Psoas muscle (tissue), 8 donors: ENCODE measurements at regions of chr16 and their contacts with region 1.

Region 1: GRCh38 chr16:2155091-2156021 is at the start of gene TRAF7:
- DNase-seq: peak; percentile 99
- ATAC-seq: peak; percentile 88 to 91 (median 89)
- H3K4me3 ChIP-seq: peak within 1 kb of the TSS; percentile 80
- H3K27ac ChIP-seq: peak within 1 kb of the TSS; percentile 90
- H3K4me1 ChIP-seq: peaks cover 67% of the 10 kb centered on the region
- H3K27me3 ChIP-seq: no peaks in the 10 kb centered on the region
- CTCF ChIP-seq: no peak
- total RNA-seq, gene TRAF7: 15.6 to 47.5 (median 38.9) TPM

Region 2: GRCh38 chr16:2023098-2023925 is 132.0 kb before region 1 on chr16:
- intact Hi-C with region 1: loop called in 1 of 2 experiments (anchors 5 kb)
- DNase-seq: peak; percentile 93 to 96
- ATAC-seq: peak; percentile 88 to 94 (median 92)
- H3K4me3 ChIP-seq: peak overlapping the region; percentile 46
- H3K27ac ChIP-seq: peak overlapping the region; percentile 52
- H3K4me1 ChIP-seq: peaks cover 24% of the 10 kb centered on the region
- H3K27me3 ChIP-seq: peaks cover 0 to 27% (median 16%) of the 10 kb centered on the region in 3 donors
- CTCF ChIP-seq: peak; percentile 96

Region 3: GRCh38 chr16:2190659-2191445 is 35.5 kb after region 1 on chr16:
- intact Hi-C with region 1: no loop called
- DNase-seq: no peak
- ATAC-seq: no peak
- H3K4me3 ChIP-seq: no peak overlapping the region
- H3K27ac ChIP-seq: no peak overlapping the region
- H3K4me1 ChIP-seq: peaks cover 7% of the 10 kb centered on the region
- H3K27me3 ChIP-seq: peaks cover 0 to 22% (median 7%) of the 10 kb centered on the region in 3 donors
- CTCF ChIP-seq: no peak

Region 4: DNA sequence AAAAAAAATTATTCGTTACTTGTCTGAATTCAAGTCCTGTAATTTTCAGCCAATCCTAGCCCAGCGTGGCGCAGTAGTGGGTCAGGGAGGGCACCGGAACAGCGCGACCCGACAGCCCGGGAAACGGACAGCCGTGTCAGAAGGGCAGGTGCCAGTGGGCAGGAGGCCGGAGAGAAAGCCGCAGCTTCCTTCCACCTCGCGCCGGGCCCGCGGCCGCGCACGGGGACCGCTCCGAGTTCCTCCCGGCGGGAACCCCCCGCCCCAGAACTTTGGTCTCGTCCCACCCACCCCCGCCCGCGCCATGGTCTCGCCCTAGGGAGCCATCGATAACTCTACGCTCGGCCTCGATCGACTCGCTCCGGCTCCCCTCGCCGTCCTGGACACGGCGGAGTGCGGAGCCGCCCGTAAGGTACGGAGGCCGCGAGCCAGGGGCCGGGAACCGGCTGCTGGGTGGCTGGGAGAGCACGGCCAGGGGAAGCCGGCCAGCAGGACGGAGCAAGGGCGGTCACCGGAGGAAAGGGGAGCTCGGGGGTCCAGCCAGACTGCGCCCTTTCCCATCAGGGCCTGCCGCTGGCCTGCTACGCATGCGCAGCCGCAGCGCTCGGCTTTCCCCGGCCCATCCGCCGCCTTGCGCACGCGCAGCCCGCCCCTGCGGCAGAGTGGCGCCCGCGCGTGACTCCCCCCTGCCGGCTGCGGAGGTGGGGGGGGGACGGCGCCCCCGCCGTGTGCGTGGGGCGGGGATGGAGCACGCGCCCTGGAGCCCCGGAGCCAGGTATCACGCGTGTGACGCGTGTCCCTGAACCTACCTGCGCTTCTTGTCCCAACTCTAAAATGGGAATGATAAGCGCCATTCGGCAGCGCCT is 50.0 kb after region 1 on chr16 and contains the start of gene MLST8:
- intact Hi-C with region 1: loop called in 1 of 2 experiments (anchors 5 kb)
- DNase-seq: peak; percentile 88 to 95
- ATAC-seq: peak; percentile 82 to 96 (median 86)
- H3K4me3 ChIP-seq: peak within 1 kb of the TSS; percentile 81
- H3K27ac ChIP-seq: peak within 1 kb of the TSS; percentile 95
- H3K4me1 ChIP-seq: peaks cover 23% of the 10 kb centered on the region
- H3K27me3 ChIP-seq: no peaks in the 10 kb centered on the region
- CTCF ChIP-seq: peak; percentile 24
- total RNA-seq, gene MLST8: 18.8 to 35.0 (median 28.7) TPM

Region 5: GRCh38 chr16:2251483-2252240 is 96.3 kb after region 1 on chr16 and contains the start of gene ECI1:
- intact Hi-C with region 1: loop called in 1 of 2 experiments (anchors 5 kb)
- DNase-seq: peak; percentile 96 to 99
- ATAC-seq: peak; percentile 96 to 98 (median 96)
- H3K4me3 ChIP-seq: peak within 1 kb of the TSS; percentile 73
- H3K27ac ChIP-seq: peak within 1 kb of the TSS; percentile 87
- H3K4me1 ChIP-seq: peaks cover 18% of the 10 kb centered on the region
- H3K27me3 ChIP-seq: no peaks in the 10 kb centered on the region
- CTCF ChIP-seq: peak; percentile 76
- total RNA-seq, gene ECI1: 103 to 143 (median 126) TPM

Region 6: GRCh38 chr16:2486645-2487516 is 331.5 kb after region 1 on chr16:
- intact Hi-C with region 1: loop called in 1 of 2 experiments (anchors 5 kb)
- DNase-seq: peak in 1 of 2 donors; percentile 79
- ATAC-seq: peak; percentile 58 to 74 (median 64)
- H3K4me3 ChIP-seq: peak overlapping the region; percentile 2
- H3K27ac ChIP-seq: no peak overlapping the region
- H3K4me1 ChIP-seq: peaks cover 36% of the 10 kb centered on the region
- H3K27me3 ChIP-seq: no peaks in the 10 kb centered on the region
- CTCF ChIP-seq: peak; percentile 25